ENCODE measurements at regions of chr10 and their contacts with region 1.

Region 1: GRCh38 chr10:97234400-97234799 is 48.6 kb upstream of the SLIT1 start:
- DNase-seq: no peak
- H3K4me3 Mint-ChIP-seq: no peak overlapping the region
- H3K27ac Mint-ChIP-seq: no peak overlapping the region
- H3K4me1 Mint-ChIP-seq: peaks cover 8% of the 10 kb centered on the region
- H3K27me3 Mint-ChIP-seq: no peaks in the 10 kb centered on the region

Region 2: DNA sequence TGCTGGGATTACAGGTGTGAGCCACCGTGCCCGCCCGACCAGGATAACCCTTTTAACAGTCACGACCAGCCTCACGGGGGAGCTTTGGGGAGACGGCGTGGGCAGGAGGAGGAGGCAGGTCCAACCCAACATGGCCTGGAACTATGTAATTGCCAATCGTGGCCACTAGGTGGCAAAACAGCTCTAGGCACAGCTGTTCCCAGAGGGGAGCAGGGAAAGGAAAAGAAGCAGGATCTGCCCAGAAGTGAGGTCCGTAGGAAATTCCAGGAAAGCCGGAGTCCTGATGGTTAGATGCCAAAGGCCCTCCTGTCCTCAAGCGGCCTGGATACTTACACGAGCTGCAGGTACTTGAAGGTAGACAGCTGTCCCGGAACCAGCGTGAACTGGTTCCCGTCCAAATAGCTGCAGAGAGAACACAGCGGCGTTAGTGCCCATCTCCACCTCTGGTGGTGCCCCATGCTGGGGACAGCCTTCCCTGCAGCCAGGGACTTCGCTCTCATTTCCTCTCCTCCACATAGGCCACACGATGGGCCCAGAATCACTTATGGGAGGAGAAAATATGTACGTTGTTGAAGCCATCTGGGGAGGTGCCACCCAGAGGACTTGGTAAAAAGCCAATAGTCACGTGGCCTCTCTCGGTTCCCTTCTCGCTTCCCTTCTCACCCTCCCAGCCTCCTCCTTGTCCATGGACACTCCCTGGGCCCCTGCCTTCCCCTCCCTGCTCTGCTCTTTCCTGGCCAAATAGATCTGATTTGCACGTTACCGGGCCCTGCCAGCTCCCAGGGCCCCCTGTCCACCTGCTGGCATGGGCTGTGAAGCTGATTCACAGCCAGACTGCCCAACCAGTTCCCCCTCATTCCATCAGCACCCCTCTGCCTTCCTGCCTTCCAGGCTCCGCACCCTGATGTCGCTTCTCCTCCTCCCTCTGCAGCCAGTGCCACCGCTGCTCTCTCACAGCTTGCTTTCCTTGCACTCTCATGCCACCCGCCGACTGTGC is 196.7 kb before region 1 on chr10:
- CTCF ChIA-PET with region 1: interaction called, 12 read pairs
- DNase-seq: peak; percentile 80
- H3K4me3 Mint-ChIP-seq: peak overlapping the region; percentile 43
- H3K27ac Mint-ChIP-seq: no peak overlapping the region
- H3K4me1 Mint-ChIP-seq: peaks cover 11% of the 10 kb centered on the region
- H3K27me3 Mint-ChIP-seq: peaks cover 10% of the 10 kb centered on the region

Region 3: DNA sequence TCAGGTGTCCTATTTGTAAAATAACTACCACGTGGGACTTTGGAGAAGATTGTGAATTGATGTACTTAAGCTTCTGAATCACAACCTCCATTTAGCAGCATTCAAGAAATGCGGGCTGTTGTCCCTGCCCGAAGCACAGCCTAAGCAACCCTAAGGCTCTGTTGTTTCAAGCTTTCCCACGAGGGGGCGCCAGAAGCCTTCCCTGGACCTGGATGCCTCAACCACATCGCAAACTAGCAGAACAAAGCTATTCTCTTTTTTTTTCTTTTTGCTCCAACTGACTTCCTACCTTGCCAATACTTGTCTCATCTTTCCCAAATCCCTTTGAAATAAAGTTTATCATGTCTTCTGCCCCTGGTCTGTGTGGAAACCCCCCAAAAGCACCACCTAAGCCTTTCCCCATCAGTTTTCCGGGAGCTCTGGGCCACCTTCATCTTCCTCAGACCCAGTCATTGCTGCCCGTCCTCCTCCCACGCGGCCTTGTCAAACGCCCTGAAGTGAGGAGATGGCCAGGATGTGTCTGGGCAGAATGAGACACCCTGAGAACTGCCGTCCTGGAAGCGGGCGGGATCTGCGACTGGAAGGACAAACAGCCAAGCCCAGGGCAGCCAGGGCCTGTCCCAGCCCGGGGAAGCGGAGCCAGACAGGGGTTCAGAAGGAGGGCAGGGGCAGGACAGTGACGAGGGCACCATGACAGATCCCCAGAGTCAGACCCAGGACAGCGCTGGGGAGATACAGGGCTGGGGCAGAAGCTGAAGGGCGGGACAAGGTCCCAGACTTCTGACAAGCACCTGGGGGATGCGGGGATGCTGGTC is 161.3 kb before region 1 on chr10:
- CTCF ChIA-PET with region 1: interaction called, 22 read pairs
- DNase-seq: peak; percentile 87
- H3K4me3 Mint-ChIP-seq: no peak overlapping the region
- H3K27ac Mint-ChIP-seq: no peak overlapping the region
- H3K4me1 Mint-ChIP-seq: peaks cover 11% of the 10 kb centered on the region
- H3K27me3 Mint-ChIP-seq: peaks cover 61% of the 10 kb centered on the region

Region 4: DNA sequence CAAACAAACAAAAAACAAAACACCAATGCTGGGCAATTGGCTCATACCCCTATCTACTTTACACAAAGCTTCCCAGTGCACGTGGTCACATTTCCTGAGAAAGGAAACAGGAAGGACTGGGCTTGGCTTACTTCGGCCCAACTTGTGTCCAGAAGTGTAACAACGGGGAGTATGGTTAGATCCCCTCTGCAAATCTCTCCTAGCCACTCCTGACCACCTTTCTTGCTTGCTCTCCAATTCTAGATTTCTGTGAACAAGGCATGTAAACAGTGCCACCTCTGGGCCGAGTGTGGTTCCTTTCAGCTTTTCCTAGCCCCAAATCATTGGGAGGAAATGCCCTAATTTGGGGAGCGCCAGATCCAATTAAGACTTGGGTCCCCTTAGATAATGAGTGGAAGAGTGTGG is 121.2 kb after region 1 on chr10:
- CTCF ChIA-PET with region 1: no interaction called
- DNase-seq: peak; percentile 35
- H3K4me3 Mint-ChIP-seq: no peak overlapping the region
- H3K27ac Mint-ChIP-seq: no peak overlapping the region
- H3K4me1 Mint-ChIP-seq: peaks cover 4% of the 10 kb centered on the region
- H3K27me3 Mint-ChIP-seq: no peaks in the 10 kb centered on the region

Region 5: GRCh38 chr10:97365761-97366351 is 131.5 kb after region 1 on chr10:
- CTCF ChIA-PET with region 1: no interaction called
- DNase-seq: no peak
- H3K4me3 Mint-ChIP-seq: no peak overlapping the region
- H3K27ac Mint-ChIP-seq: no peak overlapping the region
- H3K4me1 Mint-ChIP-seq: peaks cover 3% of the 10 kb centered on the region
- H3K27me3 Mint-ChIP-seq: no peaks in the 10 kb centered on the region

Measured in activated naive CD4-positive, alpha-beta T cell treated with anti-CD3 and anti-CD28 coated beads, Interleukin-2, amount 10 ng/mL, durations not matched to agents 7 days and 5 days (primary cell).